ENCODE measurements at regions of chr14 and their contacts with region 1.

Region 1: DNA sequence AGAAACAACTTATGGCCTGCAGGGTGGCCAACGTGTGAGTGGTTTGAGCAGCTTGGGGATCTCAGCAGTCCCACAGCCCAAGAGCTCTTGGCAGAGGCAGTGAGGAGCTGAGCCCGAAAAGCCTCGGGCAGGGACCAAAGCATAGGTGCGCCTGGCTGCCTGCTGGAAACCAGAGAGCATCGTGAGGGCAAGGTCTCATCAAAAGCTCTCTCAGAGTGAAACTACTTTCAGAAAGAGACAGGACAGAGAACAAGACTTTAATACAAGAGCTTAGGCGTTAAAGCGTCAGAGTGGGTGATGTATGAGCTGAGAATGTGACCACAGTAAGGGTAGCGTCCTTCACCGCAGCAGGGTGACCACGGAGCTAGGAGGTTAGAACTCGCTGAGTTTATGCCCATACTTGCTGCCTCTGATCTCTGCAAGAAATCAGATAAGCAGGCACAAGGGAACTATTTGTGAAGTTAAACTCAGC is 30.8 kb downstream of the LGMN start:
- DNase-seq: no peak
- H3K4me3 Mint-ChIP-seq: no peak overlapping the region
- H3K27ac Mint-ChIP-seq: no peak overlapping the region
- H3K4me1 Mint-ChIP-seq: no peaks in the 10 kb centered on the region
- H3K27me3 Mint-ChIP-seq: no peaks in the 10 kb centered on the region

Region 2: GRCh38 chr14:92783816-92784431 is 66.3 kb after region 1 on chr14:
- CTCF ChIA-PET with region 1: interaction called, 110 read pairs
- intact Hi-C with region 1: loop called (anchors 1 kb)
- DNase-seq: peak; percentile 51
- H3K4me3 Mint-ChIP-seq: no peak overlapping the region
- H3K27ac Mint-ChIP-seq: no peak overlapping the region
- H3K4me1 Mint-ChIP-seq: peaks cover 7% of the 10 kb centered on the region
- H3K27me3 Mint-ChIP-seq: no peaks in the 10 kb centered on the region

Region 3: GRCh38 chr14:92863286-92864080 is 145.9 kb after region 1 on chr14:
- CTCF ChIA-PET with region 1: no interaction called
- intact Hi-C with region 1: no loop called
- DNase-seq: no peak
- H3K4me3 Mint-ChIP-seq: no peak overlapping the region
- H3K27ac Mint-ChIP-seq: no peak overlapping the region
- H3K4me1 Mint-ChIP-seq: no peaks in the 10 kb centered on the region
- H3K27me3 Mint-ChIP-seq: no peaks in the 10 kb centered on the region